Endothelial cell of umbilical vein (primary cell): ENCODE measurements at regions of chr14 and their contacts with region 1.

Region 1: GRCh38 chr14:36604757-36605505 is 22.5 kb upstream of the NKX2-8 start:
- DNase-seq: peak; percentile 70
- H3K4me3 ChIP-seq: no peak overlapping the region
- H3K27ac ChIP-seq: no peak overlapping the region
- H3K4me1 ChIP-seq: no peaks in the 10 kb centered on the region
- H3K27me3 ChIP-seq: peaks cover 2 to 3% of the 10 kb centered on the region in 2 experiments
- CTCF ChIP-seq: peak; percentile 72 to 73
- POLR2A ChIP-seq: no peak

Region 2: GRCh38 chr14:35883677-35884293 is 721.1 kb before region 1 on chr14:
- CTCF ChIA-PET with region 1: interaction called, 6 read pairs
- POLR2A ChIA-PET with region 1: no interaction called
- dilution Hi-C with region 1: no loop called
- intact Hi-C with region 1: loop called (anchors 2 kb)
- DNase-seq: no peak
- H3K4me3 ChIP-seq: no peak overlapping the region
- H3K27ac ChIP-seq: no peak overlapping the region
- H3K4me1 ChIP-seq: peaks cover 6% of the 10 kb centered on the region
- H3K27me3 ChIP-seq: peaks cover 2 to 4% of the 10 kb centered on the region in 2 experiments
- CTCF ChIP-seq: peak; percentile 52 to 53
- POLR2A ChIP-seq: no peak